Endothelial cell of umbilical vein (primary cell): ENCODE measurements at regions of chr9 and their contacts with region 1.

Region 1: DNA sequence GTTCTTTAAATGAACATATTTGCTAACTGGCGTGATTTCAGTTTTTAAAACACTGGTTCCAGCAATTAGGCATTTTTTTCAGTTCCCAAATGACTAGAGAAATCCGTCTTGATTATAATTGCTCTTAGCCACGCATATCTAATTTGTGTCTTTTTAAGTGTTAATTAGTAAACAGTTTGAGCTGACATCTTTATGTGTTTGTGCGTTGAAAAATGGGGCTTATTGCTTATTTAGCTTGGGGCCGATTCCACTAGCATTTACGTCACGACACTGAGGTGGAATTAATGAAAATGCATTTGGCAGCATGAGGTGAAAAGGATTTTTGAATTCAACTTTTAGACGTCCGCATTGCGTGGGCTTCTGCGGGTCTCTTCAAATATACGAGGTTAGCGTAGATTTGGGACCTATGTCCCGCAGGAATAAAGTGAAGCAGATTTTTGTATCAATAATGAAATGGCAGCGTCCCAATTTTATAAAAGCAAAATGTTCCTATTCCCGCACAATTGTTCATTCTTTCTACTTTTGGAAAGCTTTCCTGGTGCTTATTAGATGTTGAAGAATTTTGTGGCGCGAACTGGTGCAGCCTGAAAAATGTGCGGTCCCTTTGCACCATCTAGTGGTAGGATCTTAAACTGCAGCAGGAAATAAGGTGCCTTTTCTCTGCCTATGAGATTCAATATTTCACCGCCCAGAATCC is 122.7 kb upstream of the LMX1B start:
- DNase-seq: peak; percentile 65
- H3K4me3 ChIP-seq: no peak overlapping the region
- H3K27ac ChIP-seq: no peak overlapping the region
- H3K4me1 ChIP-seq: no peaks in the 10 kb centered on the region
- H3K27me3 ChIP-seq: no peaks in the 10 kb centered on the region
- CTCF ChIP-seq: peak; percentile 70 to 79
- POLR2A ChIP-seq: no peak

Region 2: GRCh38 chr9:126228781-126229444 is 262.1 kb before region 1 on chr9:
- CTCF ChIA-PET with region 1: no interaction called
- POLR2A ChIA-PET with region 1: no interaction called
- dilution Hi-C with region 1: no loop called
- intact Hi-C with region 1: loop called (anchors 2 kb)
- DNase-seq: peak; percentile 60
- H3K4me3 ChIP-seq: no peak overlapping the region
- H3K27ac ChIP-seq: no peak overlapping the region
- H3K4me1 ChIP-seq: no peaks in the 10 kb centered on the region
- H3K27me3 ChIP-seq: peaks cover 2 to 5% of the 10 kb centered on the region in 2 experiments
- CTCF ChIP-seq: peak; percentile 83 to 95
- POLR2A ChIP-seq: no peak

Region 3: DNA sequence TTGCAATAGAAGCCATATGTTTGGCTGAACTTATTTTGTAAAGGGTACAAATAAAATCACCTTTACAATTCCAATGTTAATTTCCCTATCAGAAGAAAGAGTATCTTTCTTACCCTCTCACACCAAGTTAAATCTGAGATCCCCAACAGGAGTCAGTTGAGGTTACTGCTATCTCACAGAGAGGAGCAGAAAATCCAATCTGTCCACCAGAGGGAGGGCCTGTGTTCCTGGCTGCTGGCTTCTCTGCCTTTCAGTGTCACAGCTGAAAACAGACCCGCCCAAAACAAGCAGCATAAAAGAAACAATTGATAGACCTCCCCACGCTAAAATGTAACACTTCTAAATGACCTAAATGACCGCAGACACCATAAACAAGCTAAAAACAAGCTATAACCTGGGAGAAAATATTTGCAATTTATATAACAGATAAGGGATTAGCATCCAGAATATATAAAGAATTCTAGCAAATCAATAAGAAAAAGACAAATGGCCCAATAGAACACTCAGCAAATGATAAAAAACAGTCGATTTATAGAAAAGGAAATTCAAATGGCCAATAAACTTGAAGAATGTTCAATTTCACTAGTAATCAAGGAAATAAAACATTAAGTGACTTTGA is 188.9 kb before region 1 on chr9:
- CTCF ChIA-PET with region 1: interaction called, 38 read pairs
- POLR2A ChIA-PET with region 1: no interaction called
- dilution Hi-C with region 1: no loop called
- intact Hi-C with region 1: loop called (anchors 1 kb)
- DNase-seq: peak; percentile 68
- H3K4me3 ChIP-seq: no peak overlapping the region
- H3K27ac ChIP-seq: no peak overlapping the region
- H3K4me1 ChIP-seq: no peaks in the 10 kb centered on the region
- H3K27me3 ChIP-seq: peaks cover 0 to 4% of the 10 kb centered on the region in 2 experiments
- CTCF ChIP-seq: peak; percentile 68 to 79
- POLR2A ChIP-seq: no peak

Region 4: DNA sequence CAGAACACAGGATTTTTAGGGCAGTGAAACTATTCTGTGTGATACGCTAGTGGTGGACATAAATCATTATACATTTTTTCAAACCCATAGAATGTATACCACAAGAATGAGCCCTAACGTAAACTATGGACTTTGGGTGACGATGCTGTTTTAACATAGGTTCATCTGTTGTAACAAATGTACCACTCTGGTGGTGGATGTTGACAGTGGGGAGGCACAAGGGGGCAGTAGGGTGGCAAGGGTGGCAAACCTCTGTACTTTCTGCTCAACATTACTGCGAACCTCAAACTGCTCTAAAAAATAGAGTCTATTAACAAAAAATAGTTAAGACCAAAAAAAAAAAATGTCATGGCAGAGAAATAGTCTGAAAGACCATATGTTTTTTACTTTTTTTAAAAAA is 173.5 kb before region 1 on chr9:
- CTCF ChIA-PET with region 1: interaction called, 15 read pairs
- POLR2A ChIA-PET with region 1: no interaction called
- dilution Hi-C with region 1: no loop called
- intact Hi-C with region 1: loop called (anchors 1 kb)
- DNase-seq: peak; percentile 48
- H3K4me3 ChIP-seq: no peak overlapping the region
- H3K27ac ChIP-seq: no peak overlapping the region
- H3K4me1 ChIP-seq: no peaks in the 10 kb centered on the region
- H3K27me3 ChIP-seq: peaks cover 0 to 3% of the 10 kb centered on the region in 2 experiments
- CTCF ChIP-seq: peak; percentile 41 to 65
- POLR2A ChIP-seq: no peak

Region 5: DNA sequence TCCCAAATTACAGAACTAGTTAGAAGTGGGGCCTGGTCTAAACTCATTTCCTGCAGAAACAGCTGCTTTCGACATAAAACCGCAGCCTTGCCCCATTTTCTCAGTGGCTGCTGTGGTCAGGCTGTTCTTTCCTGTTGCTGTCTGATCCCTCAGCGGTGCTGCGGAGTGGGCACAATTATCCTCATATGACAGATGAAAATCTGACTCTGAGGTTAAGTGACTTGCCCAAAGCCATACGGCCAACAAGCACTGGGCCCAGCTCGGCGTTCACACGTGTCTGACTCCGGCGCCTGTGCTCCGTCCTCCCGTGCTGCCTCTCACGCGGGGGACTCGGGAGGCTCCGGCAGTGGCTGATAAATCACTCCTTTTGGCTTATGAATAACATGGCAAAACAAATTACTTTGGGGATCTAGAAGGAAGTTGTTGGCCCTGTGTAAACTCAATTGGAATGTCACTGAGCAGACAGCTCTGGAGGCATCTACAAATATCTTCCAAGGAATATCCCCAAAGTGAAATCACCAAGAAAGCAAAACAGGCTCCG is 19.9 kb before region 1 on chr9:
- CTCF ChIA-PET with region 1: interaction called, 13 read pairs
- POLR2A ChIA-PET with region 1: no interaction called
- dilution Hi-C with region 1: no loop called
- intact Hi-C with region 1: no loop called
- DNase-seq: peak; percentile 13
- H3K4me3 ChIP-seq: no peak overlapping the region
- H3K27ac ChIP-seq: no peak overlapping the region
- H3K4me1 ChIP-seq: peaks cover 6% of the 10 kb centered on the region
- H3K27me3 ChIP-seq: no peaks in the 10 kb centered on the region
- CTCF ChIP-seq: no peak
- POLR2A ChIP-seq: no peak

Region 6: DNA sequence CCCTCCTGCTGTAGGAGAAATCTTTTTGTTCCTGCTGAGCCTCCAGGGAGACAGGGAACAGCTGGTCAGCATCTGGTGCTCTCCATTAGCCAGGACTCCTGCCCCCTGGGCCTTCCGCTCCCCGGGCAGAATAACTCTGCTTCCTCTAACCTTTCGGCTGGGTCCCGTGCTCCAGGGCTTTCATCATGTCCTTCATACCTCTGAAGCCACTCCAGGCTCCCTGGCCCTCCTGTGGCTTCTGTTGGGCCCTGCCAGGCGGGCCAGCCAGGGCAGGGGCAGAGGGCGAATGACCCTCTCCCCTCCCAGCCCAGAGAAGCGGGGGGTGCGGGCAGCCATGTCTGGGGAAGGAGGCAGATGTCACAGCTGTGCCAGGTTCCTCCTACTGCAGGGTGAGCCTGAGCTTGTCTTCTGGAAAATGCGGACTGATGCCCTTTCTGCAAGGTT is 41.0 kb after region 1 on chr9:
- CTCF ChIA-PET with region 1: no interaction called
- POLR2A ChIA-PET with region 1: no interaction called
- dilution Hi-C with region 1: no loop called
- intact Hi-C with region 1: no loop called
- DNase-seq: no peak
- H3K4me3 ChIP-seq: no peak overlapping the region
- H3K27ac ChIP-seq: no peak overlapping the region
- H3K4me1 ChIP-seq: no peaks in the 10 kb centered on the region
- H3K27me3 ChIP-seq: peaks cover 25 to 37% of the 10 kb centered on the region in 2 experiments
- CTCF ChIP-seq: no peak
- POLR2A ChIP-seq: no peak

Region 7: DNA sequence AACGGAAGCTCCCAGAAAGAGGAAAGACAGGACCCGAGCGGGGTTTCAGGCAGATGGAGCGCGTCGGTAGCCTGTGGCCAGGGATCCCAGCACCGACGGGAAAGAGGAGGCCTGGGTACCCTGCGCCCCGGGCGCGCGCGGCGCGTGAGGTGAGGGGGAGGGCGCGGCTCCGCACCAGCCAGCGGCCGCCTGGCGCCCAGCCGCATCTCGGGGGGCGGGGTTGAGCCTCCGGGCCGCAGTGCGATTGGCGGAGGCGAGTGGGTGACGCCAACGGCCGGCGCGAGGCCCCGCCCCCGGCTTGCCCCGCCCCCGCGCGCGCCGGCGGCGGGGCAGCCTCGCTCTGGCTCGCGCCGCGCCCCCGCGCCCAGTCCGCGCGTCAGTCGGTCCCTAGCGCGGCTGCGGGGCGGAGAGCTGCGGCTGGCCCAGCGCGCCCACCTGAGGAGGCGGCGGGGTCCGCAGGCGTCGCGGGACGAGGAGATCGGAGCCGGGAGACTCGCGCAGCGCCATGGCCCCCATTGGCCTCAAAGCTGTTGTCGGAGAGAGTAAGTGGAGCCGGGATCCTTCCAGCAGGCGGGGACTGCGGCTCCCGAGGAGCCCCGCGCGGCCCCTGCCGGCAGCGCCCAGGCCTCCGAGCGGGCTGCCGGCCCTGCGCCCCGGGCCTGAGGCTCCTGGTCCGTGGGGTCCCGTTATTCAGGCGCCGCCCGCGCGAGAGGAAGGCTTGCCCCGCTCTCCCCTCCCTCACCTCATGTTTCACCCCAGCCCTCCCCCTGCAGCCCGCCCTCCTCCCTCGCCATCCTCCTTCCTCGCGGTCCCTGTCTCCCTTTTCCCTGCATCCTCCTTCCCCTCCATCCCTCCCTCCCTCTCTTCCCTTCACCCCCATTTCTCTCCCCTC is 1121.1 kb after region 1 on chr9 and contains the start of gene STXBP1:
- CTCF ChIA-PET with region 1: no interaction called
- POLR2A ChIA-PET with region 1: no interaction called
- dilution Hi-C with region 1: no loop called
- intact Hi-C with region 1: no loop called
- DNase-seq: peak; percentile 82
- H3K4me3 ChIP-seq: peak within 1 kb of the TSS; percentile 59 to 82 (median 79)
- H3K27ac ChIP-seq: no peak within 1 kb of the TSS
- H3K4me1 ChIP-seq: peaks cover 20% of the 10 kb centered on the region
- H3K27me3 ChIP-seq: peaks cover 2 to 3% of the 10 kb centered on the region in 2 experiments
- CTCF ChIP-seq: peak in 1 of 2 donors; percentile 28
- POLR2A ChIP-seq: peak; percentile 85
- total RNA-seq, gene STXBP1: 50.5 and 51.3 TPM in 2 replicates